Aorta (tissue), 5 donors: ENCODE measurements at regions of chr10 and their contacts with region 1.

Region 1: GRCh38 chr10:97498076-97498840 is at the start of gene MMS19:
- DNase-seq: peak; percentile 100
- ATAC-seq: peak; percentile 98
- H3K4me3 ChIP-seq: peak within 1 kb of the TSS; percentile 65 to 73
- H3K27ac ChIP-seq: peak within 1 kb of the TSS; percentile 36 to 85
- H3K4me1 ChIP-seq: peaks cover under 1 to 7% of the 10 kb centered on the region in 2 donors
- H3K27me3 ChIP-seq: no peaks in the 10 kb centered on the region
- total RNA-seq, gene MMS19: 34.3 to 63.8 TPM

Region 2: GRCh38 chr10:97365761-97366351 is 132.4 kb before region 1 on chr10:
- intact Hi-C with region 1: no loop called
- DNase-seq: no peak
- ATAC-seq: no peak
- H3K4me3 ChIP-seq: no peak overlapping the region
- H3K27ac ChIP-seq: no peak overlapping the region
- H3K4me1 ChIP-seq: no peaks in the 10 kb centered on the region
- H3K27me3 ChIP-seq: no peaks in the 10 kb centered on the region

Region 3: DNA sequence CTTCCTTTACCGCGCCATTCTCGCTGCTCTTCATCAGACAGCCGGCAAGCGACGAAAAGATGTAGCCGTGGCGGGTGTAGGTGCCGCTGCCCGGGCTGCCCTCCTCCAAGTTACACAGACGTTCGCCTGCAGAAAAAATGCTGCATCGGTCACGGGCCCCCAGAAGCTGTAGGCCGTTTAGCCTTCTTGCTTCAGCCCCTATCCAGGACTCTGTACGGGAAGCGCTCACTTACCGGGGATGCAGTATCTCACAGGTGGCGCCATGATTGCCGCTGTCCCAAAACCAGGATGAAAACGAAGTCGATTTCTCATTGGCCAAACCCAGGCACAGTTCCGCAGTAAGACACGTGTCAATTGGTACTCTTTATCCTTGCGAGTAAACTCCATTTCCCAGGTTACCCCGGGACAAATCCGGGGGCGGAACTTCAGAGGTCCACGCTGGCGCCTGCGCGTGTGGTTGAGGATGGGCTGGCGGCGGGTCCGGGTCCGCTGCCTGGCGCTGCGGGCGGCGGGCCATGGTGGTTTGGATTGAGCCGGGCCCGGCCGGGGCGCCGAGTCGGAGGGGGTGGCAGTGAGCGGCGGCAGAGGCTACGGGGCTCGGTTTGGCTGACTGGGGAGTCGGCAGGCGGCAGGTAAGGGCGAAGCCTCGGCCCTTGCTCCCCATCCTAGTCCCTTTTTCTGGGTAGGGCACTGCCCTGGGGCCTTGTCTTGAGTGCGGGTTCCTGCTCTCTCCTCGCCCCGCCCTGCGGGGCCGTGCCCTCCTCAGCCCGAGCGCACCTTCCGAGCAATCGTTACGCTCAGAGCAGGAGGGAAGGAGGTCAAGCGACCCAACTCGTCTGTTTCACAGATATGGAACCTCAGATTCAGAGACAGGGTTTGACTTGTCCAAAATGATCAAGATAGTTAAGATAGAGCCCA is 52.3 kb before region 1 on chr10 and contains the starts of genes EXOSC1 and ZDHHC16:
- intact Hi-C with region 1: loop called in 1 of 2 experiments (anchors 10 kb)
- DNase-seq: peak; percentile 94 to 96
- ATAC-seq: peak; percentile 99
- H3K4me3 ChIP-seq: peak within 1 kb of the TSS; percentile 89 to 92
- H3K27ac ChIP-seq: no peak within 1 kb of the TSS
- H3K4me1 ChIP-seq: peaks cover 7 to 8% of the 10 kb centered on the region in 2 donors
- H3K27me3 ChIP-seq: no peaks in the 10 kb centered on the region
- total RNA-seq, gene EXOSC1: 25.6 to 27.2 TPM
- total RNA-seq, gene ZDHHC16: 29.6 to 35.6 TPM

Region 4: GRCh38 chr10:97543025-97543575 is 44.8 kb after region 1 on chr10:
- intact Hi-C with region 1: loop called (anchors 2 kb)
- DNase-seq: peak; percentile 92 to 93
- ATAC-seq: peak; percentile 92
- H3K4me3 ChIP-seq: no peak overlapping the region
- H3K27ac ChIP-seq: peak overlapping the region; percentile 94 to 97
- H3K4me1 ChIP-seq: peaks cover 2 to 5% of the 10 kb centered on the region in 2 donors
- H3K27me3 ChIP-seq: no peaks in the 10 kb centered on the region